ENCODE measurements at regions of chr5 and their contacts with region 1.

Region 1: GRCh38 chr5:172293054-172293744 is 9.6 kb upstream of the UBTD2 start:
- DNase-seq: peak; percentile 81
- ATAC-seq: peak; percentile 99
- H3K4me3 ChIP-seq: no peak overlapping the region
- H3K27ac ChIP-seq: no peak overlapping the region
- H3K4me1 ChIP-seq: no peaks in the 10 kb centered on the region
- H3K27me3 ChIP-seq: no peaks in the 10 kb centered on the region
- CTCF ChIP-seq: peak; percentile 92

Region 2: DNA sequence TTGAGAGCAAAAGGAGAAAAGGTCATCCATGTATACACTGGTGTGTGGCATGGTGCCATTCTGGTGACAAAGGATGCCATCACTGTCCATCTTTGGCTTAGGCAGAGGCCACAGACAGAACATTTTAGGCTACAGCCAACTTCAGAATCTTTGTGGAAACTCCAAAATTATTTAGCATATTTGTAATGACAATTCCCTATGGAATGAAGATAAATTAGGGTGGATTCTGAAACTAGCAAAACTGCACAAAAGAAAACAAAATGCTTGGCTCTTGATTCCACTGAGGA is 379.3 kb before region 1 on chr5:
- CTCF ChIA-PET with region 1: no interaction called
- POLR2A ChIA-PET with region 1: no interaction called
- intact Hi-C with region 1: loop called (anchors 5 kb)
- DNase-seq: no peak
- ATAC-seq: peak; percentile 38; the same call in 1 of the 2 replicates
- H3K4me3 ChIP-seq: no peak overlapping the region
- H3K27ac ChIP-seq: no peak overlapping the region
- H3K4me1 ChIP-seq: peaks cover 10% of the 10 kb centered on the region; the same call in 1 of the 2 replicates
- H3K27me3 ChIP-seq: no peaks in the 10 kb centered on the region
- CTCF ChIP-seq: no peak

Region 3: DNA sequence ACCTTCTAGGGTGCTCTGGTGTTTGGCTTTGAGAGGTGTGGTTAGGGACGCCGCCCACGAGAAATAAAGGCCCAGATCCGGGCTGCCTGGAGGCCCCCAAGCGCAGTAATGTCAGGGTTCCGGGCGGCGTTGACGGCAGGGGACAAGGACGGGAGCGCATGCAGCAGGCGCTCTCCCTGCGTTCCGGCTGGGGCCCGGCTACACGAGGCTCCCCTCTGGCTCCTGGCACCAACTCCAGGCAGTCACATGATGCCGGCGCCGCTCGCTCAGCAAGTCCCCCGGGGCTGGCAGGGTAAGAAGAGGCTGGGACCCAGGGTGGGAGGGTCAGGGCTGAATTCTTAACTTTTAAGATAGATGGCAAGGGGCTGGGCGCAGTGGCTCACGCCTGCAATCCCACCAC is 37.8 kb before region 1 on chr5:
- CTCF ChIA-PET with region 1: no interaction called
- POLR2A ChIA-PET with region 1: no interaction called
- intact Hi-C with region 1: no loop called
- DNase-seq: no peak
- ATAC-seq: no peak
- H3K4me3 ChIP-seq: no peak overlapping the region
- H3K27ac ChIP-seq: no peak overlapping the region
- H3K4me1 ChIP-seq: no peaks in the 10 kb centered on the region
- H3K27me3 ChIP-seq: no peaks in the 10 kb centered on the region
- CTCF ChIP-seq: no peak